H1 (cell line): ENCODE measurements at regions of chr15 and their contacts with region 1.

Region 1: DNA sequence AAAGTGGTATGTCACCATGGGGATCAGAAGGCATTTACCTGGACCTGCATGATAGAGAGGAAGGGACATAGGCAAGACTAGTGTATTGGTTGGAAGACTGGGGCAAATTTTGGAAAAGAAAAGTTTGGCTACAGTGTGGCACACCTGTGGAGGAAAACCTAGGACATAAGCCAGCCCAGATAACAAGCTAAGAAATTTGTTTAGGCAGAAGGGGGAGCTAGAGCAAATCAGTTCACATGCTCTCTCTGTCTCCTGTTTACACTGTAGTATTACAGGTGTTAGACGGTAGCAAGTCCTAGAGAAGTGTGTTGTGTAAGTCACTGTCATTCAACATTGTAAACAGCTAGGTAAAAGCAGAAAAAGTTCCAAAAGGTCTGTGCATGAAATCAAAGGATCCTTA is 11.9 kb upstream of the ALDH1A2 start:
- DNase-seq: no peak
- H3K4me3 ChIP-seq: no peak overlapping the region
- H3K27ac ChIP-seq: no peak overlapping the region
- H3K4me1 ChIP-seq: peaks cover 0 to 3% (median 0%) of the 10 kb centered on the region in 4 experiments; a peak in 1 of 7 replicates
- H3K27me3 ChIP-seq: no peaks in the 10 kb centered on the region
- CTCF ChIP-seq: peak in 2 of 3 experiments; percentile 54 to 59; a peak in 2 of 4 replicates
- EP300 ChIP-seq: no peak
- POLR2A ChIP-seq: no peak
- RAD21 ChIP-seq: peak; percentile 63 to 66

Region 2: DNA sequence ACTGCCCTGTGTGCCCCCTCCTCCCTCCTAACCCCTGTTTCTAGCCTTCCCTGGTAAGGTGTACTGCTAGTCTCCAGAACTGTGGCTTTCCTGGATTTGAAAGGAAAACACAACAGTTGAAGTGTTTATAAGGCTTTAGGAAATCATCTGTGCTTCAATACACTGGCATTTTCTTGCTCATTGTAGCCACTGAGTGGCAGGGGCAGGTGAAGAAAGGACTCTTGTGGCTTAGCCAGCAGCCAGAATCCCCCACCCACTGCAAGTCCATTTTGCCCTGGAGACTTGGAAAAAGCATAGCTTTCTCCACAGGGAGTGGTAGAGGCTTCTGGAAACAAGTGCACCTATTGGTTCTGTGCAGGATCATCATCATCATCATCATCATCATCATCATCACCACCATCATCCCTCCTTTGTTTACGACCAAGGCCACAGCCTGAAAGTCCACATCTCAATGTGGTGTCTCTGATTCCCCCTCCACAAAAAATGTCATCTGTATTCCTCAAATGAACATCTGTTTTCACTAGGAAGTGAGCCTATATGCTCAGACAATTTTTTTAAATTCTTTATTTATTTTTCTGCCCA is 94.1 kb after region 1 on chr15:
- CTCF ChIA-PET with region 1: interaction called, 10 read pairs
- POLR2A ChIA-PET with region 1: no interaction called
- DNase-seq: no peak
- H3K4me3 ChIP-seq: no peak overlapping the region
- H3K27ac ChIP-seq: no peak overlapping the region
- H3K4me1 ChIP-seq: no peaks in the 10 kb centered on the region
- H3K27me3 ChIP-seq: no peaks in the 10 kb centered on the region; a peak in 1 of 7 replicates
- CTCF ChIP-seq: no peak
- EP300 ChIP-seq: no peak
- POLR2A ChIP-seq: no peak
- RAD21 ChIP-seq: no peak

Region 3: DNA sequence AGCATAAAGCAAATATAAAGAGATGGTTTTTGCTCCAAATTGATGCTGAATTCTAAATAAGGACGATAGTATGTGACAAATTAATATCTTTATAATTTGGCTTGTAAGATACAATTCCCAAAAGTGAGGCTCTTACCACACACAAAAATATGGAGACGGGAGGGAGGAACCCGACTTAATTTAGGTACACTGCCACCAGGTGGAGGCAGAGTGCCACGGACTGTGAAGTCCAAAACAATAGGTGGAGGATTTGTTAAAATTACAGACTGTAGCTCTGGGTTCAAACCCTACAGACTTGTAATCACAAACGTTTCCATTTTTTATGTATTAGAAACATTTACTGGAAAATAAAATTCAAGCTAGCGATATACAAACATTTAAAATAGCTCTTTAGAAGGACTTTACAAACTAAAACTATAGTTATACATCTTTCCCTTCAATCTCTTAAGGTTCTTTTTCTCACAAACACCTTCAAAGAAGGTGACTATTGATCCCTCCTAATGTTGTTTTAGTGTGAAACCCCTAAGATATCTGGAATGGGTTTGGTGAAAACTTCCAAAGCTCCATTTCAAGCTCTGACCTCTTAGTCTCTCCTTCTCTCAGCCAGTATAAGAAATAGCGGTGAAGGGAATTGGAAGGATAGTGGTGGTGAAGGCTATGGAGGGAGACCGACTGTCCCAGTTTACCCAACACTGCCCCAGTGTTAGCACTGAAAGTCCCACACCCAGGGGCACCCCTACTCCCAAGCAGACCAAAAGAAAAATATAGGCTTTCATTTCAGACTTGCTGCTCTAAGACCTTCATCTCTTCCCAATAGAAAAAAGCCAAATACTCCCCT is 150.5 kb after region 1 on chr15:
- CTCF ChIA-PET with region 1: interaction called, 11 read pairs
- POLR2A ChIA-PET with region 1: no interaction called
- DNase-seq: peak; percentile 36 to 80
- H3K4me3 ChIP-seq: peak overlapping the region in 1 of 4 experiments; percentile 35; a peak in 1 of 8 replicates
- H3K27ac ChIP-seq: no peak overlapping the region
- H3K4me1 ChIP-seq: peaks cover 8 to 18% (median 12%) of the 10 kb centered on the region in 4 experiments; a peak in 6 of 7 replicates
- H3K27me3 ChIP-seq: no peaks in the 10 kb centered on the region
- CTCF ChIP-seq: peak; percentile 68 to 76 (median 69)
- EP300 ChIP-seq: no peak
- POLR2A ChIP-seq: no peak
- RAD21 ChIP-seq: peak; percentile 97 to 98